HEK293T (cell line): ENCODE measurements at regions of chr1 and their contacts with region 1.

Region 1: DNA sequence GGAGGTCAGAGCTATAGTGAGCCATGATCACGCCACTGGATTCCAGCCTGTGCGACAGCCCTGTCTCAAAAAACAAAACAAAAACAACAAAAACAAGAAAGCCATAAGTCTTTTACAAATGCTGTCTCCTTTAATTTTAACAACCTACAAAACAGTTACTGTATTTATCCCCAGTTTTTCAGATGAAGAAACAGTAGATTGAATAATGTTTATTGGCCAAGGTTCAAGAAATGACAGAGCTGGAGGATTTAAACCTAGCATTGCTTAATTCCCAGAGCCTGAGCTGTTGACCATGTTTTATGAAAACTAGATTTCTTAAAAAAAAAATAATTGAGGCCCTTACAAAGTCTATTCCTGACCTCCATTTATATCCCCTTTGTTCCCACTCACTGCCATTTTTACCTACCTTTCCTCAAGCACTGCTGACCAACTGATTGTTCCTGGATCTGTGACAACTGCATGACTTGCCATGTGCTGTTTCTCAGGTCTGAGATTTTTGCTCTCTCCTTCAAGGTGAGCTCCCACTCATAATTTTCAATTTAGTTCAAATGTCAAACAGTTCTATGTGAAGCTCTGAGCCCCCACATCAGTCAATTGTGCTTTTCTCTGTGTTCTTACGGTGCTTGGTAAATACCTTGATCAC is 140.8 kb downstream of the CHRM3 start:
- DNase-seq: no peak

Region 2: GRCh38 chr1:237655778-237656177 is 1871.4 kb before region 1 on chr1:
- CTCF ChIA-PET with region 1: interaction called, 10 read pairs
- POLR2A ChIA-PET with region 1: no interaction called
- DNase-seq: no peak